GM12878 (cell line): ENCODE measurements at regions of chr7 and their contacts with region 1.

Region 1: DNA sequence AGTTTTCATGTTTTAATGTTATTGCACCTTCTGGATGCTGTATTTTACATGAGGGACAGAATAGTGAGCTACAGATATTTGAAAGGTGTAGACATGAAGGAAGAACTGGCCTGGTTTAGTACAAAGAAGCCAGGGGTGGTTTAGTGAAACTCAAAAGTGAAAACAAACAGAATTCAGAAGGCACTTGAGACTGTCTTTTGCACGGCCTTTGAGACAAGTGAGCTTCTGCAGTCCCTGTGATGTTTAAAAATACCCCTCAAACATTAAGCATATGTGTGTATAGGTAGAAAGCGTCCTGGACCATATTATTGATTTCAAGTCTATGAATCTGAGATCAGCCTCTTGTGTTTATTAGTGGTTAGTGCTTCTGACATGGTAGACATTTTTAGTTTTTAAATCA is 118.9 kb downstream of the CDK14 start:
- DNase-seq: no peak
- ATAC-seq: peak; percentile 65
- H3K4me3 ChIP-seq: peak overlapping the region; percentile 52; the same call in 1 of the 2 replicates
- H3K27ac ChIP-seq: peak overlapping the region; percentile 51; the same call in 1 of the 2 replicates
- H3K4me1 ChIP-seq: no peaks in the 10 kb centered on the region
- H3K27me3 ChIP-seq: no peaks in the 10 kb centered on the region
- CTCF ChIP-seq: no peak
- EP300 ChIP-seq: no peak
- POLR2A ChIP-seq: no peak
- RAD21 ChIP-seq: no peak

Region 2: DNA sequence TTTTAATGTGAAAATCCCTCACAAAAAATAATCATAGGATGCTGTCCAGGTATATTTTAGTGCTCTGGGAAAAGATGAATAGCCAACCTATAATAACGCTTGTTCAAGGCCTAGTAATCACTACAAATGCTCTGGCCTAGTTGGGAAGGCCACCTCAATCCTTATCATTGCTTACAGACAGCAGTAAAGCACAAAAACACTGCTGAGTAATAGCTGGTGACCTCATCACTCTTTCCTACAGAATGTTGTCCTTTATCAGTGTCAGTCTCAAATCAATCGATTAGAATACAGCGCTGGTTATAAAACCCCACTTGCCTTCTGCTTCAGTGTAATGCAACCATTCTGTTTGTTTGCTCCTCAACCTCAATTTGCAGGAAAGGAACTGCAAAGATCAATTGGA is 633.4 kb before region 1 on chr7:
- CTCF ChIA-PET with region 1: no interaction called
- POLR2A ChIA-PET with region 1: no interaction called
- RAD21 ChIA-PET with region 1: no interaction called
- SMC1A ChIA-PET with region 1: no interaction called
- in situ Hi-C with region 1: no loop called
- intact Hi-C with region 1: no loop called
- DNase-seq: no peak
- ATAC-seq: no peak
- H3K4me3 ChIP-seq: no peak overlapping the region
- H3K27ac ChIP-seq: no peak overlapping the region
- H3K4me1 ChIP-seq: no peaks in the 10 kb centered on the region
- H3K27me3 ChIP-seq: no peaks in the 10 kb centered on the region
- CTCF ChIP-seq: no peak
- EP300 ChIP-seq: no peak
- POLR2A ChIP-seq: no peak
- RAD21 ChIP-seq: no peak

Region 3: DNA sequence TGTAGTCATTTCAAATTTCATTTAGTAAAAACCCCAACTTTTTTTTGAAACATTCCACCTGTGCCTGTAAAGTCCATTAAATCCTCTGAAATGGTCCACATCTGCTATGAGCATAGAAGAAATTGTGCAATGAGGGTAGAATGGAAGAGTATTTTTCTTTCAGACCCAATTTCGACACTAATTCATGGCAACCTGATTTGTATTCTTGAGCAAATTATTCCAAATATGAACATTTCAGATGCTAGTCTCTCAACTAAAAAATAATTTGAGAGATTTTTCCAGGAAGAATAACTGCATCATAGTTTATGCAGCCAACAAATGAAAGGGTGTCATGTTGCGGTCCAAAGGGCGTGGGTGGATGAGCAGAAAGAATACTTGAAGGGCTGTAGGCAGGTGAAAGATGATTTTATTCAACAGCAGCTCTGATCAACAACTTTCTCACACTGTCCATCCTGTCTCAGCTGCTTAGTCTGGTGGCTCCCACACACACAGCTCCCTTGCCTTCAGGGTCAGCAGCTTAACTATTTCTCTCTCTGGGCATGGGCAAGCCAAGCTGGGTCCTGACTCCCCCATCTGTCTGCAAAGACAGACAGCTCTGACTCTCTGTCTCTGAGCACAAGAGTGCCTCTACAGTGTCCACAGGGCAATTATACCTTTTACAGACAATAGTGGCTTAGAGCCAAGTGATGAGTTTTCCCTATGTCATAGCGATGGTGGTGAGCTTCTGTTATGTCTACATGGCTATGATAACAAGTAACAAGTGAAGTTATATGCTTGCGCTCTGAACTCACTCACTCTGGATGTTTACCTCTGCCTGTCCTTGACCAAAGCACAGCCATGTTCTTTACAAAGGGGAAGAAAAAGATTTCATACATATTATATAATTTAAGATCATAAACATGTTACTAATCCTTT is 492.0 kb before region 1 on chr7:
- CTCF ChIA-PET with region 1: no interaction called
- POLR2A ChIA-PET with region 1: no interaction called
- RAD21 ChIA-PET with region 1: no interaction called
- SMC1A ChIA-PET with region 1: no interaction called
- in situ Hi-C with region 1: no loop called
- intact Hi-C with region 1: no loop called
- DNase-seq: no peak
- ATAC-seq: peak; percentile 75
- H3K4me3 ChIP-seq: no peak overlapping the region
- H3K27ac ChIP-seq: no peak overlapping the region
- H3K4me1 ChIP-seq: no peaks in the 10 kb centered on the region
- H3K27me3 ChIP-seq: no peaks in the 10 kb centered on the region
- CTCF ChIP-seq: no peak
- EP300 ChIP-seq: no peak
- POLR2A ChIP-seq: no peak
- RAD21 ChIP-seq: no peak

Region 4: DNA sequence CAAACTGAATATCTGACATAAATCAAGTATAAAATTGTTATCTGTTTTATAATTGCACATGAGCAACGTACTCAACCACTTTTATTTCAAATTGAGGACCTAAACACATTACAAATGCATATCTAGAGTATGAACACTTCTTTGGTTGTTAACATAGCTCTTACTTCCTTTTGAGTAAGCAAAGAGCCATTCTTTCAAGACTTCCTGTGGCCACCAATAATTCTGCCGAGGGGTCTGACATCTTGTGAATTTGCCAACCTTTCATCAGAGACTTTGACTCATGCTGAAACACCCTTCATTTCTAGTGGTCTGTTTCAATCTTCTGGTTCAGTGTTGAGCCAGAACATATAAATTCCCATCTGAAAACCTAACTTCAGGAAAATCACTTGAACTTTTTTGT is 59.5 kb before region 1 on chr7:
- CTCF ChIA-PET with region 1: no interaction called
- POLR2A ChIA-PET with region 1: no interaction called
- RAD21 ChIA-PET with region 1: no interaction called
- SMC1A ChIA-PET with region 1: interaction called, 11 read pairs
- in situ Hi-C with region 1: no loop called
- intact Hi-C with region 1: no loop called
- DNase-seq: no peak
- ATAC-seq: peak; percentile 83
- H3K4me3 ChIP-seq: no peak overlapping the region
- H3K27ac ChIP-seq: peak overlapping the region; percentile 64
- H3K4me1 ChIP-seq: peaks cover 20% of the 10 kb centered on the region
- H3K27me3 ChIP-seq: no peaks in the 10 kb centered on the region
- CTCF ChIP-seq: no peak
- EP300 ChIP-seq: no peak
- POLR2A ChIP-seq: no peak
- RAD21 ChIP-seq: no peak

Region 5: GRCh38 chr7:90726623-90727022 is 11.6 kb after region 1 on chr7:
- CTCF ChIA-PET with region 1: interaction called, 60 read pairs
- POLR2A ChIA-PET with region 1: interaction called, 25 read pairs
- RAD21 ChIA-PET with region 1: interaction called, 41 read pairs
- SMC1A ChIA-PET with region 1: interaction called, 181 read pairs
- in situ Hi-C with region 1: no loop called
- intact Hi-C with region 1: no loop called
- DNase-seq: no peak
- ATAC-seq: peak; percentile 38
- H3K4me3 ChIP-seq: peak overlapping the region; percentile 20; the same call in 1 of the 2 replicates
- H3K27ac ChIP-seq: peak overlapping the region; percentile 47; the same call in 1 of the 2 replicates
- H3K4me1 ChIP-seq: peaks cover 10% of the 10 kb centered on the region
- H3K27me3 ChIP-seq: no peaks in the 10 kb centered on the region
- CTCF ChIP-seq: no peak
- EP300 ChIP-seq: no peak
- POLR2A ChIP-seq: no peak
- RAD21 ChIP-seq: no peak

Region 6: DNA sequence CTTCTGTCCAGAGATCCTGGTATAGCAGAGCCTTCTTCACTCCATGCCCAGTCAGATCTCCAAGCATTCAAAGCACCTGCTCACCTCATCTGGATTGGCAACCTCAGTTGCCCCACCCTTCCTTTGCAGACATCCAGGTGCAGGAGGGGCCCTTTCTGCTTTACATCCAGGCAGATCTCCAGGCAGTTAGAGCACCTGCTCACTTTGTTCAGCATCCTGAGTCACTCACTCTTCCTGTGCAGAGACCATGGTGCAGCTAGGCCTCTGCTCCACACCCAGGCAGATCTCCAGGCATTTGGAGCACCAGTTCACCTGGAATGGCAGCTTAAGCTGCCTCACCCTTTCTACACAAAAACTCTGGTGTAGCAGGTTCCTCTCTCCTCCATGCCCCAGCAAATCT is 34.2 kb after region 1 on chr7:
- CTCF ChIA-PET with region 1: interaction called, 183 read pairs
- POLR2A ChIA-PET with region 1: interaction called, 4 read pairs
- RAD21 ChIA-PET with region 1: interaction called, 47 read pairs
- SMC1A ChIA-PET with region 1: interaction called, 73 read pairs
- in situ Hi-C with region 1: no loop called
- intact Hi-C with region 1: no loop called
- DNase-seq: no peak
- ATAC-seq: peak; percentile 22; the same call in 1 of the 3 replicates
- H3K4me3 ChIP-seq: no peak overlapping the region
- H3K27ac ChIP-seq: no peak overlapping the region
- H3K4me1 ChIP-seq: no peaks in the 10 kb centered on the region
- H3K27me3 ChIP-seq: no peaks in the 10 kb centered on the region
- CTCF ChIP-seq: no peak
- EP300 ChIP-seq: no peak
- POLR2A ChIP-seq: no peak
- RAD21 ChIP-seq: no peak

Region 7: DNA sequence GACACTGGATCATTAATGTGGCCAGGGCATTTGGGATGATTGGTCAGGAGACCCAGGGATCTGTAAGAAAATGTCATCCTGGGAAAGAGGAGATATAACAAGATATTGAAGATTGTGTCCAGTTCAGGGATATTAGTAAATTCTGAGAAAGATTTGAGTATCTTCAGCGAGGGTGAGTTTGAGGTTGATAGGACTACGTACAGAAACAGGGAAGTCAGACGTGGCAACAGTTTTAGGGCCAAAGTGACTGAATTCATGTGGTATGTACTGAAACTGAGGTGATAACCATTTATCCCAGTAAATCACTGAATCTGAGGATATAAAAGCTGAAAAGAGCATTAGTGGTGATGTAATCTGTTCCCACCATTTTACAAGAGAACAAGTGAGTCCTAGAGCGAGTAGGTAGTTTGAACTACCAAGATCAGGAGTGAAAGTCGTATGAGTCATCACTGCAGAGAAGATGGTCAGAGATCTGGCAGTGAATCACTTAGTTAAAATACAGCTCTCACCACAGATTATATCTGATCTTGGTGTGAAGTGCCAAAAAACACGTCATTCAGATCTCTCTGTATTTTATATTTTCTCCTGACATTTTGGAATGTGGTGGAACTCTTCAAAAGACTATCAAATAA is 101.6 kb after region 1 on chr7:
- CTCF ChIA-PET with region 1: interaction called, 13 read pairs
- POLR2A ChIA-PET with region 1: no interaction called
- RAD21 ChIA-PET with region 1: interaction called, 16 read pairs
- SMC1A ChIA-PET with region 1: interaction called, 20 read pairs
- in situ Hi-C with region 1: no loop called
- intact Hi-C with region 1: no loop called
- DNase-seq: peak; percentile 85
- ATAC-seq: peak; percentile 99
- H3K4me3 ChIP-seq: no peak overlapping the region
- H3K27ac ChIP-seq: peak overlapping the region; percentile 52
- H3K4me1 ChIP-seq: 0 out of 2 replicates have a peak, but pooled peaks cover 4% of the 10 kb centered on the region
- H3K27me3 ChIP-seq: no peaks in the 10 kb centered on the region
- CTCF ChIP-seq: no peak
- EP300 ChIP-seq: peak in 1 of 2 experiments; percentile 93; a peak in 3 of 4 replicates
- POLR2A ChIP-seq: no peak
- RAD21 ChIP-seq: no peak

Region 8: DNA sequence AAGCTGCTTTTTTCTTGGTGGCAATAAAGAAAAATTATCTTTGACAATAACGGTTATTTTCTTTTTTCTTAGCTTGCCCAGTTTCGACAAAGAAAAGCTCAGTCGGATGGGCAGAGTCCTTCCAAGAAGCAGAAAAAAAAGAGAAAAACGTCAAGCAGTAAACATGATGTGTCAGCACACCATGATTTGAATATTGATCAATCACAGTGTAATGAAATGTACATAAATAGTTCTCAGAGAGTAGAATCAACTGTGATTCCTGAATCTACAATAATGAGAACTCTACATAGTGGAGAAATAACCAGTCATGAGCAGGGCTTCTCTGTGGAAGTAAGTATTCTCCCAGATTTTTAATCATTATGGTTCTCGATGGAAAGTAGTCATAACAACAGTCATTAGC is 1258.6 kb after region 1 on chr7:
- CTCF ChIA-PET with region 1: no interaction called
- POLR2A ChIA-PET with region 1: no interaction called
- RAD21 ChIA-PET with region 1: no interaction called
- SMC1A ChIA-PET with region 1: no interaction called
- in situ Hi-C with region 1: no loop called
- intact Hi-C with region 1: no loop called
- DNase-seq: no peak
- ATAC-seq: no peak
- H3K4me3 ChIP-seq: no peak overlapping the region
- H3K27ac ChIP-seq: no peak overlapping the region
- H3K4me1 ChIP-seq: no peaks in the 10 kb centered on the region
- H3K27me3 ChIP-seq: no peaks in the 10 kb centered on the region
- CTCF ChIP-seq: no peak
- EP300 ChIP-seq: no peak
- POLR2A ChIP-seq: no peak
- RAD21 ChIP-seq: no peak